ENCODE measurements at regions of chr12 and their contacts with region 1.

Region 1: DNA sequence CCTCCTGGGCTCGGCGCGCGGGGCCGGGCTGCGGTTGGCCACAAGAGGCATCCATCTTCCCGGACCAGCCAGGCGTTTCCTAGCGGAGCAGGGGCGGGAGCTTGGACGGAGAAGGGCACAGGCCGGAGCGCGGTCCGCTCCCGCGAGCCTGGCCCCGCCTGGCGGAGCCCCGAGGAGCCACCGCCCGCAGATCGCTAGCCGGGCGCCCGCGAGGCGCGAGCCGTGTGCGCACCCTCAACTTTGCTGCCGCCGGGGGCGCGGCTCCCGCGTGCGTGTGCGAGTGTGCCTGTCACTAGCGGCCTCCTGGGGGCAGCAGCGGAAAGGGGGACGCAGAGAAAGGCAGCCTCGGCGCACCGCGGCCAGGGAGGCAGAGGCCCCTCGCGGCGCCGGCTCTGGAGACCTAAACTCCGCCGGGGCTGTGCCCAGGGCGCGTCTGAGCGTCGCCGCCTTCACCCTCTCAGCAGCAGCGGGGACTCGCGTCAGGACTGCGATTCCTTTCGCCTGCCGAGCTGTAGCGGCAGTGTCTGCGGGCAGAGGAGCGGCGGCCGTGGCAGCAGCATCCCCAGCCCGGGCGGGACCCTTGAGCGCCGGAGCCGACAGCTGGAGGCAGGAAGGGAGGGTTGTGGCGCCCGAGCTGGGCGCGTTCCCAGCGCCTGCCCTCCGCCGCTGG is 644 bp upstream of the SRGAP1 start:
- DNase-seq: peak; percentile 88 to 98
- H3K4me3 ChIP-seq: peak overlapping the region; percentile 71 to 89 (median 78)
- H3K27ac ChIP-seq: peak overlapping the region; percentile 91 to 97 (median 93)
- H3K4me1 ChIP-seq: peaks cover 8 to 42% (median 17%) of the 10 kb centered on the region in 4 donors
- H3K27me3 ChIP-seq: peaks cover 0 to 3% (median 0%) of the 10 kb centered on the region in 3 donors
- CTCF ChIP-seq: peak in 5 of 7 experiments; percentile 75 to 95 (median 89)
- EP300 ChIP-seq: no peak
- POLR2A ChIP-seq: no peak

Region 2: DNA sequence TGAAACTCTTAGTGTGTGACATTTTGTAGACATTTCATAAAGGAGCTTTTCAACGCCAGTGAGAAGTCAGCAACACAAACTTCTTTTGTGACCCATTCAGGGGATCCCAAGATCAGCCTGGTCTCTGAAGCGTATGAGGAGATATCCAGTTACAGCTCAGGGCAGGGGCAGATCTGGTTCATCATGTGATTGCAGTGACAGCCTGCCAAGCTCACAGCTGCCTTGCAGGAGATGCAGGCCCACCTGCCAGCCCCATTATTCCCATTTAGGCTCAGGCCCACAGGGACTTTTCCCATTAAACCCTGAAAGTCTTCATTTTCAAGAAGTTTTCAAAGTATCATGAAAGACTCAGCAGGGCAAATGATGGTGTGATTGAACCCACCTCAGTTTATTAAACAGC is 39.0 kb after region 1 on chr12:
- intact Hi-C with region 1: no loop called
- DNase-seq: peak in 1 of 2 donors; percentile 20
- H3K4me3 ChIP-seq: no peak overlapping the region
- H3K27ac ChIP-seq: no peak overlapping the region
- H3K4me1 ChIP-seq: no peaks in the 10 kb centered on the region
- H3K27me3 ChIP-seq: no peaks in the 10 kb centered on the region
- CTCF ChIP-seq: no peak
- EP300 ChIP-seq: no peak
- POLR2A ChIP-seq: no peak

Region 3: DNA sequence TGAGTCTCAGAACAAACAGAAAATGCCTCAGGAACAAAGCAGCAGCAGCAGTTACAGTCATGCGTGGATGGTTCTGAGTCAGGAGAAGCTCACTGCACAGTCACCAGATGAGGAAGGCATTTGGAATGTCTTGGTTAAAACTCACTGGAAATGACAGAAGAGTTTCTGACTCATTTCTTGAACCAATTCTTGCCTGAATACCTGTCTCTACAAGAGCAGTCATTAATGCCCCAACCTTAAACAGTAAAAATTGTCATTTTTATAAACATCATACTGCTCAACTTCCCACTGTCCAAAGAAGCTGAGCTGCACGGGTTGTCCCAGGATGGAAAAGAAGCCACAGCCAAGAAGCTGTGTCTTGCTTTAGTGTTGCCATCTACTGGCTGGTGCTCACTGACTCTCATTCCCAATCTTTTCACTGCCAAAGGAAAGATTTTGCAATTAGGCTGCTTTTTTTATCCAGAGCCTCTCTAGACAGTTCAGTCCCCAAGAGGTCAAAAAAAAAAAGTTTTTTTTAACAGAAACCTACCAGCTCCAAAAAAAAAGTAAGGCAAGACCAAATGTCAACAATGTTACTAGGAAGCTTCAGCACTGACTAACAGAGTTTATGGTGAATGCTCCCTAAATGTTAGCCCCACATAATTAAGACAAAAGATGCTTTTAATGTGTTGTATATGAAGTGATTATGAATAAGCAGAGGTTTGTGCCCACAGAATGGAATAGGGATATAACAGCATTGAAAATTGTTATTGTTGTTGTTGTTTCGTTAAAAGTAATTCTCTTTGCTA is 337.8 kb after region 1 on chr12:
- intact Hi-C with region 1: loop called (anchors 5 kb)
- DNase-seq: peak; percentile 44 to 82
- H3K4me3 ChIP-seq: no peak overlapping the region
- H3K27ac ChIP-seq: peak overlapping the region in 4 of 5 donors; percentile 31 to 75 (median 54)
- H3K4me1 ChIP-seq: peaks cover 0 to 20% (median 8%) of the 10 kb centered on the region in 4 donors
- H3K27me3 ChIP-seq: no peaks in the 10 kb centered on the region
- CTCF ChIP-seq: peak in 5 of 7 experiments; percentile 43 to 66 (median 52)
- EP300 ChIP-seq: no peak
- POLR2A ChIP-seq: no peak

Measured in stomach (tissue), 19 donors.